ENCODE measurements at regions of chr21 and their contacts with region 1.

Region 1: DNA sequence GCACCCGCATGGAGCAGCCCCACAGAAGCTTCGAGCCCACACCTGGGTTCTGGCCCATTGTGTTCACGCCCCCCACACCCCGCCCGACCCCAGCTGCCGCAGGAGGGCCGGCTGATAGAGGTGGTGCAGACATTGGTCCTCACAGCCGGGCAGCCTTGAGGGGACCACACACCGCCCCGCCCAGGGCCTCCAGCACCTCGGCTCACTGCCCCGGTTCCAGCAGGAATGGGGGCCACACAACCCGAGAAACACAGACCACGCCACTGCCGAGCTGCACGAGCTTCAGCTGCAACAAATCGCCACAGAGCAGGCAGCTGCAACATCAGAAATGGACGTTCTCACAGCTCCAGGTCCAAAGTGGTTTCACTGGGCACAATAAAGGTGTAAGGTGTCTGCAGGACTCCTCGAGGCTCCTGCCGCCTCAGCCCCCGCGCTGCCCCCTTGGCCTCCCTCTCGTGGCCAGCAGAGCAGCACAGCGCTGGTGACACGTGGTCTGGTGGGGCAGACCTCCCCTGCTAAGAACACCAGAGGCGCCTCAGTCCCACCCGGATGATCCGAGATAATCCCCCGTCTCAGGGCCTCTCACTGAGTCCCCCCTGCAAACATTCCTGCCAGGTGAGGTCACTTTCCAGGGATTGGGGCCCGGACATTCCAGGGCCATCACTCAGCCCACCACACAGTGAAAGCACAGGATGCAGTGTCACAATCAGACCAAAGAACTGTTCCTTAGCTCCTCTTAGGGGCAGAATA is 62.3 kb upstream of the ADARB1 start:
- DNase-seq: peak; percentile 99
- ATAC-seq: peak; percentile 94
- H3K4me3 ChIP-seq: peak overlapping the region; percentile 57
- H3K27ac ChIP-seq: peak overlapping the region; percentile 85
- H3K4me1 ChIP-seq: peaks cover 25% of the 10 kb centered on the region
- H3K27me3 ChIP-seq: no peaks in the 10 kb centered on the region
- CTCF ChIP-seq: no peak

Region 2: DNA sequence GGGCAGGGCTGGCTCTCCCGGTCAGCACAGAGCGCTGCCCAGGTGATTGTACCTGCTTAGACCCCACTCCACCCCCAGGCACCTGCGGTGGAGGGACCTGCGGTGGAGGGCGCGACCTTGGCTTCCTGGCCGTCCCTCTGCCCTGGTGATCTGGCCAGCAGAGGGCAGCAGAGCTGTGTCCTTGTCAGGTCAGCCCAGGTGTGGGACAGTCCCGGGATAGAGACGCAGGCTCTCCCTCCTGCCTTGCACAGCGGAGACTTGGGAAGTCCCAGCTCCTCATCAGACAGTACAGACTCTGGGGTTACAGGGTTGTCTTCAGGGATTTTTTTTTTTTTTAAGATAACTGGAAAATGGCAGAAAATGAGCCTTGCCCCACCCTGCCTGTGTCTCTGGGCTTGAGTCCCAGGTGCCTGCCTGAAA is 62.3 kb before region 1 on chr21:
- CTCF ChIA-PET with region 1: interaction called, 15 read pairs
- POLR2A ChIA-PET with region 1: no interaction called
- intact Hi-C with region 1: no loop called
- DNase-seq: peak; percentile 81
- ATAC-seq: peak; percentile 84
- H3K4me3 ChIP-seq: no peak overlapping the region
- H3K27ac ChIP-seq: no peak overlapping the region
- H3K4me1 ChIP-seq: peaks cover 13% of the 10 kb centered on the region; the same call in 1 of the 2 replicates
- H3K27me3 ChIP-seq: no peaks in the 10 kb centered on the region
- CTCF ChIP-seq: peak; percentile 96

Region 3: DNA sequence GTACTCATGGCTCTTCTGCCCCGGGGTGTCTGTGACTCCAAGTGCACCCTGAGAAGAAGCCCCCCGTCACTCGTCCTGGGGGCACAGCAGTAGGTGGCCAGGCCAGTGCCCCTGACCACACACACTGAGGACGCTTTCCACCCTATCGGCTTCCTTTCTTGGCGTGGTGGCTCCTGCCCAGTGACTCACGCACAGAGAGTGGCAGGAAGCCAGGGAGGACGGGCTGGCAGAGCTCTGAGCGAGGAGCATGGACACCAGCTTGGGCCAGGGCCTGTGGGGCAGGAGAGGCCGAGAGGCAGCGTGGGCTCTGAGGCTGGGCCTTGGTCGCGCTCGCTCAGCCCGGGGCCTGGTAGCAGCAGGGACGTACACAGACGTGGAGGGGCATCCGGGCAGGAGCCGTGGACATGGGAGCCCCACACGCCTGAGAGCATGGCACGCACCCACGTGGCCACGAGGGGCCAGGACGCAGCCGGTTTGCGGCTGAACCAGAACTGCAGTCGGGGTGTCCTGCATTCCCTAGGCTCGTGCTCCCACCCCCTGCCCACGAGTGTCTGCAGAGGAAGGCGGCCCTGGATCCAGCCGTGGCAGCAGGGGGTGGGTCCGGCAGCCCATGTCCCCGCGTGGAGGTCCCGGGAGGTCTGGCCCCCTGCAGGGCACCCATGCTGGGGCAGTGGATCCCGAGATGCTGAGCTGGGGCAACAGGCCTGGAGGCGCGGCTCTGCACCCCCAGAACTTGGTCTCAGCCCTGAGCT is 10.9 kb before region 1 on chr21:
- CTCF ChIA-PET with region 1: no interaction called
- POLR2A ChIA-PET with region 1: no interaction called
- intact Hi-C with region 1: loop called (anchors 1 kb)
- DNase-seq: peak; percentile 94
- ATAC-seq: peak; percentile 93
- H3K4me3 ChIP-seq: no peak overlapping the region
- H3K27ac ChIP-seq: no peak overlapping the region
- H3K4me1 ChIP-seq: peaks cover 21% of the 10 kb centered on the region
- H3K27me3 ChIP-seq: no peaks in the 10 kb centered on the region
- CTCF ChIP-seq: no peak

Region 4: GRCh38 chr21:45074048-45074817 is 62.1 kb after region 1 on chr21 and contains the start of gene ADARB1:
- CTCF ChIA-PET with region 1: no interaction called
- POLR2A ChIA-PET with region 1: interaction called, 5 read pairs
- intact Hi-C with region 1: loop called (anchors 2 kb)
- DNase-seq: peak; percentile 62
- ATAC-seq: peak; percentile 46
- H3K4me3 ChIP-seq: peak within 1 kb of the TSS; percentile 88
- H3K27ac ChIP-seq: peak within 1 kb of the TSS; percentile 41
- H3K4me1 ChIP-seq: peaks cover 21% of the 10 kb centered on the region; the same call in 1 of the 2 replicates
- H3K27me3 ChIP-seq: no peaks in the 10 kb centered on the region
- CTCF ChIP-seq: no peak
- total RNA-seq, gene ADARB1: 14.1 and 21.0 TPM in 2 replicates

Region 5: GRCh38 chr21:45098867-45099266 is 86.8 kb after region 1 on chr21:
- CTCF ChIA-PET with region 1: interaction called, 11 read pairs
- POLR2A ChIA-PET with region 1: no interaction called
- intact Hi-C with region 1: no loop called
- DNase-seq: peak; percentile 52
- ATAC-seq: peak; percentile 48
- H3K4me3 ChIP-seq: no peak overlapping the region
- H3K27ac ChIP-seq: no peak overlapping the region
- H3K4me1 ChIP-seq: peaks cover 16% of the 10 kb centered on the region
- H3K27me3 ChIP-seq: no peaks in the 10 kb centered on the region
- CTCF ChIP-seq: peak; percentile 80

Region 6: GRCh38 chr21:45143855-45144254 is 131.8 kb after region 1 on chr21:
- CTCF ChIA-PET with region 1: no interaction called
- POLR2A ChIA-PET with region 1: no interaction called
- intact Hi-C with region 1: no loop called
- DNase-seq: no peak
- ATAC-seq: no peak
- H3K4me3 ChIP-seq: no peak overlapping the region
- H3K27ac ChIP-seq: no peak overlapping the region
- H3K4me1 ChIP-seq: no peaks in the 10 kb centered on the region
- H3K27me3 ChIP-seq: no peaks in the 10 kb centered on the region
- CTCF ChIP-seq: no peak

Measured in PC-3 (cell line).